Breast epithelium (tissue), 4 donors: ENCODE measurements at regions of chr11 and their contacts with region 1.

Region 1: GRCh38 chr11:48020092-48020755 is 39.9 kb downstream of the PTPRJ start:
- DNase-seq: no peak
- H3K4me3 ChIP-seq: no peak overlapping the region
- H3K27ac ChIP-seq: no peak overlapping the region
- H3K4me1 ChIP-seq: no peaks in the 10 kb centered on the region
- H3K27me3 ChIP-seq: no peaks in the 10 kb centered on the region
- CTCF ChIP-seq: no peak
- POLR2A ChIP-seq: no peak

Region 2: DNA sequence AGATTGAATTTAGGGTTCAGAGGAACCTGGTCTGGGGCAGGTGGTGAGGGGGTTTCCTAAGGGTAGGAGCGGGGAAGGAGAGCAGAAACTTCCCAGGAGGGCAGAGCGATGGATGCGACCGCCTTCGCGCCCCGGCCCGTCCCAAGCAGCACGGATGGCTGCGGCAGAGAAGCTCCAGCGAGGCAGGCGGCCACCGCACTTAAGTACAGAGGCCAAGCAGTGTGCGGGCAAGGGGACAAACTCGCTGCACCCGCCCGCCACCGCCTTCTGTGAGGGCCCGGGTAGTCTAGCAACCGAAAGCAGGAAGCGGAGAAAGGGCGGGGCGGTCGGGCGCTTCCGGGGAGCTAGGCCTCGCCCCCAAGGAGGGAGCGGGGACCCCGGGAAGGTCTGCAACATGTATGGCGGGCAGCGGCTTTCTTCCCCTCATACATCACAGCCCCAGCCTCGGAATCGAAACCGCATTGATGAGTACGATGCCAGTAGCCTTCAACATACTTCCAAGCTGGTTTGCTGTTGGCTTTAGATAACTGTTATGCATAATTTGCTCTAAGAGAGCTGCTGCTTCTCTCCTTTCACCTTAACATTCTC is 305.0 kb before region 1 on chr11 and contains the start of gene AGBL2:
- intact Hi-C with region 1: no loop called
- DNase-seq: peak; percentile 31 to 67
- H3K4me3 ChIP-seq: peak within 1 kb of the TSS; percentile 72 to 84 (median 75)
- H3K27ac ChIP-seq: peak within 1 kb of the TSS; percentile 75 to 76
- H3K4me1 ChIP-seq: no peaks in the 10 kb centered on the region
- H3K27me3 ChIP-seq: no peaks in the 10 kb centered on the region
- CTCF ChIP-seq: no peak
- POLR2A ChIP-seq: peak; percentile 48
- total RNA-seq, gene AGBL2: 0.16 to 3.2 (median 2.3) TPM

Region 3: DNA sequence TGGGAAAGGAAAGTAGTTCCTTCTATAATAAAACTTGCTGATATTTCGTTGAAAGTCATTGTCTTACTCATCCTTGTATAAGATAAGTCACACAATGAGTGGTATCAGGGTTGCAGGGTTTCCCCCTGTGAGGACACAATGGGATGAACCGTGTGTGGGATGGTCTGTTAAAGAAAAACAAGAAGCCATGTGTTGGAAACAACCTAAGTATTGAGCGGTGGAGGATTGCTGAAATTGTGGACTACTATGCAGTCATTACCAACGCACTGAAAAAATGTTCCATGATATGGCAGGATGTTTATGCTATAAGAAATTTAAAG is 11.3 kb before region 1 on chr11:
- intact Hi-C with region 1: loop called (anchors 1 kb)
- DNase-seq: no peak
- H3K4me3 ChIP-seq: no peak overlapping the region
- H3K27ac ChIP-seq: no peak overlapping the region
- H3K4me1 ChIP-seq: no peaks in the 10 kb centered on the region
- H3K27me3 ChIP-seq: no peaks in the 10 kb centered on the region
- CTCF ChIP-seq: no peak
- POLR2A ChIP-seq: no peak